Caco-2 (cell line): ENCODE measurements at regions of chr22 and their contacts with region 1.

Region 1: DNA sequence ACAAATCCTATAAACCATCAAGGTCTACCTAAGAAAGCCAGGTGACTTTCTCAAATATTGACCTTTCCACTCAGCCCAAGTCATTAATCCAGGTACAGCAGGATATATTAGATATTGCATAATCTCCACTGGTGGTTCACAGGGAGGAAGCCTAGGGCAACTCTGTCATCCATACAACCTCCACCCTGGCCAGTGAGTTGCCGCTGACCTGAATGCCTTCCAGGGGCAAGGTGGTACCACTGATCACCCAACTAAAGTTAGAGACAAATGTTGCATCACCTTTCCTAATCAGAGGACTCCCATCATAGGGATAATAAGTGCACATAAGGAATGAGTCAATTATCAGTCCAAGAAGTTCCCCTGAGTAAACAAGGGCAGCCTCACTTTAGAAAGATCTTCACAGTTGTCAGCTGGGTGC is 22.8 kb downstream of the GUCD1 start:
- DNase-seq: peak; percentile 62 to 66
- H3K4me3 ChIP-seq: no peak overlapping the region
- H3K4me3 Mint-ChIP-seq: peak overlapping the region; percentile 19
- H3K27ac Mint-ChIP-seq: peak overlapping the region; percentile 45
- H3K4me1 ChIP-seq: peaks cover 50% of the 10 kb centered on the region
- H3K4me1 Mint-ChIP-seq: peaks cover 21% of the 10 kb centered on the region
- H3K27me3 ChIP-seq: no peaks in the 10 kb centered on the region
- H3K27me3 Mint-ChIP-seq: no peaks in the 10 kb centered on the region
- CTCF ChIP-seq: no peak

Region 2: DNA sequence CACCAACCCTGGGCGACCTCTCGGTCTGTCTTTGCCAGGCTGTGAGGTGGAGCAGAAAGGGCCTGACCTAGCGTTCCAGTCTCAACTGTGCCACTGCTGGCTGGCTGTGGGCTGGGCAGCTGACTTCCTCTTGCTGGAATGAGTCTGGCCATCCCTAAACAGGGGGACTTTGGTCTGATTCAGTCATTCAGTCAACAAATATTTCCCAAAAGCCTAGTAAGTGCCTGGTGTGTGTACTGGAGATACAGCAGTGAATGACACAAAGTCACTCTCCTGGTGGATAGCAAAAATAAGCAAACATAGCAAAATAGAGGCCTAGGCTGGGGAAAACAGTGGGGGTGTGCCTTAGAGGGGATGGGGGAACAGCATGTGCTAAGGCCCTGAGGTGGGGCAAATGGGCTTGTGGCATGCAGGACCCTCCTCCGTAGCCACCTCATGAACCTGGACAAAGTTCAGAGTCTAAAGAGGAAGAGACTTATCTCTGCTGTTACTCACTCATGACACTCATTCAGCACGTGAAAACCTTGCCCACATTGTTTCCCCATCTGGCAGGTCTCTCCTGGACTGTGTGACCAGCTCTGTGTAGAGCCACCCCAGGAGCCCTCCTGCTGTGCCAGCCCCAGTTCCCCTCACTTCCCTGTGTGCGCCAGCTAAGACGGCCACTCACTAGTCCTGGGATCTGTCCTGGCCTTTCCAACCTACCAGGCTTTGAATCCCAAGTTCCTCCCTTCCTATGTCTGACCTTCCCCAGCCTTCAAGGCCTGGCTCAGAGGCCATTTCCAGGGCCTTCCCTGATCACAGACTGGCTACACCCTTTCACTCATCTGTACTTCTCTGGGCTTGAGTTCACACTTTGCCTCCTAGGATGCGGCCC is 18.2 kb after region 1 on chr22:
- CTCF ChIA-PET with region 1: no interaction called
- POLR2A ChIA-PET with region 1: interaction called, 8 read pairs
- intact Hi-C with region 1: loop called (anchors 1 kb)
- DNase-seq: peak; percentile 71 to 72
- H3K4me3 ChIP-seq: no peak overlapping the region
- H3K4me3 Mint-ChIP-seq: peak overlapping the region; percentile 34
- H3K27ac Mint-ChIP-seq: peak overlapping the region; percentile 69
- H3K4me1 ChIP-seq: peaks cover 43% of the 10 kb centered on the region
- H3K4me1 Mint-ChIP-seq: peaks cover 33% of the 10 kb centered on the region
- H3K27me3 ChIP-seq: no peaks in the 10 kb centered on the region
- H3K27me3 Mint-ChIP-seq: no peaks in the 10 kb centered on the region
- CTCF ChIP-seq: no peak

Region 3: DNA sequence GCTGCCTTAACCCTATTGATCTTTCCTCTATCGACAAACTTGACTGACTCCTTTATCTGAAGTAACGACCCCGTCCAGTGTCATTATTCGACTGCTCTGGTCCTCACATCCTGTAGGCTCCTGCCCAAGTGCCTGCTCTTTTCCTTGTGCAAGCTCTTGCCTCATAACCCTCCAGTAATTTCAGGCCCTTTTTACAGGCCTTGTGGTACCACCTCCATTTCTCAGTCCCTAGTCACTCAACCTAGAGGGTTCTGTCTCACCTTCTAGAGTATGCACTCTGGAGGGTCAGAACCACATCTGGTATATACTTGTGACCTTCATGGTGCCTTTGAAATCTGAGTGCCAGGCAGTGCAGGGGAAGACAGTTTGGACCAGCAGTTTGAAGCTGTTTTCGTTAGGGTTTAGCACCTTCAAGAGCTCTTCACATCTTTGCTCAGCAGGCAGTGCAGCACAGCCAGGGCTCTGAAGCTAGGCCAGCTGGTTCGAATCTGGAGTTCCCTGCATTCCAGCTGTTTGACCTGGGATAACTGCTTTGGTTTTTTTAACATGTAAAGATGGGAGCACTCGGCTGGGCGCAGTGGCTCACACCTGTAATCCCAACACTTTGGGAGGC is 34.9 kb after region 1 on chr22:
- CTCF ChIA-PET with region 1: no interaction called
- POLR2A ChIA-PET with region 1: no interaction called
- intact Hi-C with region 1: no loop called
- DNase-seq: no peak
- H3K4me3 ChIP-seq: no peak overlapping the region
- H3K4me3 Mint-ChIP-seq: peak overlapping the region; percentile 22
- H3K27ac Mint-ChIP-seq: peak overlapping the region; percentile 21
- H3K4me1 ChIP-seq: peaks cover 16% of the 10 kb centered on the region; the same call in 1 of the 2 replicates
- H3K4me1 Mint-ChIP-seq: peaks cover 14% of the 10 kb centered on the region
- H3K27me3 ChIP-seq: no peaks in the 10 kb centered on the region
- H3K27me3 Mint-ChIP-seq: no peaks in the 10 kb centered on the region
- CTCF ChIP-seq: no peak

Region 4: DNA sequence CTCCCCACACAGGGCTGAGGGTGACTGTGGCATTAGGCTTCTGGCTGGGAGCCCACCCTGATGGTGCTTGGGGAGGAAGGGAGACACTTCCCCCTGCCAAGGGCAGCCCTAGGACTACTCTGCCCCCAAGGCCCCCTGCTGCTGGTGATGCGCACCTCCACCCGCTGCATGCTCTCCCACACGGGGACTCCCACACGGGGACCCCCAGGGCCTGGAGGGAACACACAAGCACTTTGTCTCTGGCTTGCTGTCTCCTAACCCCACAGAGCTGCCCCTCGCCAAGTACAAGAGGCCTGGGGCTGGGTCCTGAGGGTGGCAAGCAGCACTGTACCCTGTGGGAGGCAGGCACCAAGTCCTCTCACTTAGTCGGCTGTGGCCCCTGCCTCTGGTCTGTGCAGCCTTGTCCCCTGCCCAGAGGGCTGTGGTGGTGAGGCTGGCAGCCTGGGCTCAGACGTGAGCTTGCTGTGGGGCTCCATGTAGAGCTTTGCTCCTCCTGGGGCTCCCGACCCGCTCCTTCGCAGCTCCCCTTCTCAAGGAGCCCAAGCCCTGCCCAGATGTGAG is 52.8 kb after region 1 on chr22:
- CTCF ChIA-PET with region 1: no interaction called
- POLR2A ChIA-PET with region 1: interaction called, 12 read pairs
- intact Hi-C with region 1: no loop called
- DNase-seq: no peak
- H3K4me3 ChIP-seq: no peak overlapping the region
- H3K4me3 Mint-ChIP-seq: no peak overlapping the region
- H3K27ac Mint-ChIP-seq: no peak overlapping the region
- H3K4me1 ChIP-seq: peaks cover 8% of the 10 kb centered on the region
- H3K4me1 Mint-ChIP-seq: peaks cover 14% of the 10 kb centered on the region
- H3K27me3 ChIP-seq: no peaks in the 10 kb centered on the region
- H3K27me3 Mint-ChIP-seq: no peaks in the 10 kb centered on the region
- CTCF ChIP-seq: no peak